ENCODE measurements at regions of chr7 and their contacts with region 1.

Region 1: DNA sequence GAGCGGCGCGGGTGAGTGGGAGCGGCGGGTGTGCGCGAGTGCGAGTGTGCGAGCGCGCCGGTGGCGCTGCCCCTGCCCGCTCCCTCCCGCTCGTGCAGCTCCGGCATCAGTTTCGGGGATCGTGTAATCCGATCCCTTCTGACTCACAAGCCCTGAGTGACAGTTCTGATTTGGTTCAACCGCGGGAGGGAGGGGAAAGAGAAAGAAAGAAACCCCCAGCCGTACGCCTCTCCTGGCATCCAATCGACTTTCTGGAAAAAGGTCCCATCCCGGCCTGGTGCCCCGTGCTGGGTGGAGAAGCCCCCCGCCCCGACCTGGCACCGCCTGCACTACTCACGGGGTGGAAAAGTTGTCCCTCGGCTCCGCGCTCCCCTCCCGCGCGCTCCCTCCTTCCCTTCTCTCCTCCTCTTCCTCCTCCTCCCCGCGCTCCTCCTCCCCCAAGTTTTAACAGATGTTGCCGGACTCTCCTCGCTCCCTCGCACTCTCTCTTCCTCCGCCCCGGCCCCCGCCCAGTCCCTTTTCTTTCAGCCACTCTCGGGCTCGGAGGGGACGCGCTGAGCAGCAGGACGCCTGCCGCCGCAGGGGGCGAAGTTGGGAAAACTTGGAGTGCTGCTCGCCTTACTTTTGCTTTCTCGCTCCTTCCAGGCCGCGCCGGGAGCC is at the start of gene GLI3:
- DNase-seq: peak; percentile 93
- H3K4me3 ChIP-seq: peak within 1 kb of the TSS; percentile 73 to 92 (median 73)
- H3K27ac ChIP-seq: peak within 1 kb of the TSS; percentile 81
- H3K4me1 ChIP-seq: peaks cover 31% of the 10 kb centered on the region
- H3K27me3 ChIP-seq: no peaks in the 10 kb centered on the region
- CTCF ChIP-seq: peak; percentile 5 to 43
- total RNA-seq, gene GLI3: 6.3 to 26.2 TPM

Region 2: DNA sequence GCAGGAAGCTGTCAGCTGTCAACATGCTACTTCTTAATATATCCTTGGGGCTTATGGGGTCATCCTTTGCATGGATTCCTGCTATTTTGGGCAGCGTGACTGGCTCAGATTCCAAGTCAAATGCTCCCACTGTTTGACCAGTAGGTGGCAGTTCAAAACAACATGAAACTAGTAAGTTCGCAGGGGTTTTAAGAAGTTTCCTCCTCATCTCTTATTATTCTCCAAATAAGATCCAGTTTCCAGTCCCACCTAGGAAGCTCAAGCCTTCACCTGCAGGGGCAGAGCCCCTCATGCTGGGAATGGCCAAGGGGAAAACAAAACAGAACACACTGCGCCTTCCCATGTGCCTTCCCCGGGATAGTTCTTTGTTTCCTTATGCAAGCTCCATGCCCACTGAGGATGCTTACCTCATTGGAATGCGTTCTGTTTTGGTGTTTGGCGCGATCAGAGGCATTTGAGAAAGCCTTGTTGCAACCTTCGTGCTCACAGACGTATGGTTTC is 260.1 kb before region 1 on chr7:
- CTCF ChIA-PET with region 1: no interaction called
- dilution Hi-C with region 1: loop called (anchors 25 kb)
- in situ Hi-C with region 1: loop called in 1 of 2 experiments (anchors 25 kb)
- intact Hi-C with region 1: loop called (anchors 5 kb)
- DNase-seq: peak; percentile 41
- H3K4me3 ChIP-seq: no peak overlapping the region
- H3K27ac ChIP-seq: no peak overlapping the region
- H3K4me1 ChIP-seq: no peaks in the 10 kb centered on the region
- H3K27me3 ChIP-seq: no peaks in the 10 kb centered on the region
- CTCF ChIP-seq: peak; percentile 82 to 85

Region 3: DNA sequence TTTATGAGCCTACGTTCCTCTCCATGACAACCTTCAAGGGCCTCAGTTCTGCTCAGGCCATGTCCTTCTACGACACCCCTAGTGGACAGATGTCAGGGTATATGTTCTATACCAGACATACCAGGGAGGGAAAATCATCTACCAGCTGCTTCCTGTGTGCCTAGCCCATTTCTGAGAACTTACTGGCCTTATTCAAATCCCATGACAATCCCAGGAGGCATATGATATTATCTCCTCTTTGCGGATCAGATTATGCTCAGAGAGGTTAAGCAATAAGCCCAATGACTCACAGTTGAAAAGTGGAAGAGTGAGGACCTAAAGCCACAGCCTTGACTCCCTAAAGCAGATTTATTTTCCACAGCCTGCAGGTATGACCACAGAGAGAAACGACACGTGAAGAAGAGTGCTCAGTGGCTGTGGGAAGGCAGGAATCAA is 139.5 kb before region 1 on chr7:
- CTCF ChIA-PET with region 1: no interaction called
- dilution Hi-C with region 1: no loop called
- in situ Hi-C with region 1: no loop called
- intact Hi-C with region 1: loop called (anchors 10 kb)
- DNase-seq: peak; percentile 98
- H3K4me3 ChIP-seq: no peak overlapping the region
- H3K27ac ChIP-seq: peak overlapping the region; percentile 37
- H3K4me1 ChIP-seq: peaks cover 35% of the 10 kb centered on the region
- H3K27me3 ChIP-seq: no peaks in the 10 kb centered on the region
- CTCF ChIP-seq: peak; percentile 37 to 46

Region 4: DNA sequence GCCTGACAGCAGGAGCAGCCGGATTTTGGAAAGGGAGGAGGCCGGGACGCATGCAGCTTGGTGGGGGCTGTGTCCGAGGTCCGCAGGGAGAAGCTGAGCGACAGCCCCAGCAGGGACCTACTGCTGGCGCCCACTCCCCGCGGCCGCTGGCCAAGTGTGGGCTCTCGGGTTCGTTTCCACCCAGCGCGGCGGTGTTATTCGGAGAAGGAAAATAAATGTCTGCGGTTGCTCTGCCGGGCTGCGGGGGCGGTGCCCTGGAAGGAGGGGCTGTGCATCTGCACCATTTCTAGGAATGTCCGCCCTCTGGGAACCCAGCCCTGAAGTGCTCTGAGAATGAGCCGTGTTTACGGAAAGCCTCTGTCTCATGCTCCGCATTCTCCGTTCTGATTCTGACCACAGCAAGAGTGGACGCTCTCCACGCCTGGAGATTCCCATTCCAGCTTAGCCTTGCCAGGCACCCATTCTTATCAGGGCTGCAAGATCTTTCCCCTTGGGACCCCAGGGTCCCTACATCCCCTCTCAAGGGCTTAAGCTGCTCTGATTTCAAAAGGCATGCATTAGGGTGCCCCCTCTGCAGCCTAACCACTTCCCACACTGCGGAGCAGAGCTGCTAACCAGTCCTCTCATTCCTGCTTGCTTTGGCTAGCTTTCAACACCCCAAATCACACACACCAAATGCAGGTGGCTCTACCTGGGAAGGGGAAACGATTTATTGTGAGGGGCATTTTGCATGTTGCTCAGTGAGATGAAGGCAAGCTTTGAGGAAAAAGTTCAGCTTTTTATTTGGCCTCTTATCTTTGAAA is 256.3 kb after region 1 on chr7:
- CTCF ChIA-PET with region 1: no interaction called
- dilution Hi-C with region 1: no loop called
- in situ Hi-C with region 1: no loop called
- intact Hi-C with region 1: loop called (anchors 10 kb)
- DNase-seq: peak; percentile 81
- H3K4me3 ChIP-seq: peak overlapping the region; percentile 47 to 54 (median 49)
- H3K27ac ChIP-seq: peak overlapping the region; percentile 81
- H3K4me1 ChIP-seq: peaks cover 30% of the 10 kb centered on the region
- H3K27me3 ChIP-seq: no peaks in the 10 kb centered on the region
- CTCF ChIP-seq: no peak

Region 5: GRCh38 chr7:42831718-42832431 is 594.6 kb after region 1 on chr7:
- CTCF ChIA-PET with region 1: no interaction called
- dilution Hi-C with region 1: no loop called
- in situ Hi-C with region 1: no loop called
- intact Hi-C with region 1: loop called (anchors 10 kb)
- DNase-seq: peak; percentile 30
- H3K4me3 ChIP-seq: no peak overlapping the region
- H3K27ac ChIP-seq: no peak overlapping the region
- H3K4me1 ChIP-seq: no peaks in the 10 kb centered on the region
- H3K27me3 ChIP-seq: no peaks in the 10 kb centered on the region
- CTCF ChIP-seq: peak; percentile 60 to 90